Endothelial cell of umbilical vein (primary cell): ENCODE measurements at regions of chr11 and their contacts with region 1.

Region 1: GRCh38 chr11:94519478-94520084 is 7.3 kb downstream of the C11orf97 start:
- DNase-seq: peak; percentile 38
- H3K4me3 ChIP-seq: no peak overlapping the region
- H3K27ac ChIP-seq: no peak overlapping the region
- H3K4me1 ChIP-seq: no peaks in the 10 kb centered on the region
- H3K27me3 ChIP-seq: peaks cover 12 to 13% of the 10 kb centered on the region in 2 experiments
- CTCF ChIP-seq: peak; percentile 30 to 40
- POLR2A ChIP-seq: no peak

Region 2: GRCh38 chr11:94504689-94505293 is 14.8 kb before region 1 on chr11:
- CTCF ChIA-PET with region 1: interaction called, 15 read pairs
- POLR2A ChIA-PET with region 1: no interaction called
- dilution Hi-C with region 1: no loop called
- intact Hi-C with region 1: no loop called
- DNase-seq: peak; percentile 66
- H3K4me3 ChIP-seq: no peak overlapping the region
- H3K27ac ChIP-seq: no peak overlapping the region
- H3K4me1 ChIP-seq: no peaks in the 10 kb centered on the region
- H3K27me3 ChIP-seq: peaks cover 0 to 2% of the 10 kb centered on the region in 2 experiments
- CTCF ChIP-seq: peak; percentile 33 to 40
- POLR2A ChIP-seq: no peak

Region 3: GRCh38 chr11:94563176-94563847 is 43.7 kb after region 1 on chr11:
- CTCF ChIA-PET with region 1: interaction called, 8 read pairs
- POLR2A ChIA-PET with region 1: no interaction called
- dilution Hi-C with region 1: no loop called
- intact Hi-C with region 1: loop called (anchors 1 kb)
- DNase-seq: peak; percentile 61
- H3K4me3 ChIP-seq: no peak overlapping the region
- H3K27ac ChIP-seq: no peak overlapping the region
- H3K4me1 ChIP-seq: peaks cover 12% of the 10 kb centered on the region
- H3K27me3 ChIP-seq: no peaks in the 10 kb centered on the region
- CTCF ChIP-seq: no peak
- POLR2A ChIP-seq: no peak

Region 4: DNA sequence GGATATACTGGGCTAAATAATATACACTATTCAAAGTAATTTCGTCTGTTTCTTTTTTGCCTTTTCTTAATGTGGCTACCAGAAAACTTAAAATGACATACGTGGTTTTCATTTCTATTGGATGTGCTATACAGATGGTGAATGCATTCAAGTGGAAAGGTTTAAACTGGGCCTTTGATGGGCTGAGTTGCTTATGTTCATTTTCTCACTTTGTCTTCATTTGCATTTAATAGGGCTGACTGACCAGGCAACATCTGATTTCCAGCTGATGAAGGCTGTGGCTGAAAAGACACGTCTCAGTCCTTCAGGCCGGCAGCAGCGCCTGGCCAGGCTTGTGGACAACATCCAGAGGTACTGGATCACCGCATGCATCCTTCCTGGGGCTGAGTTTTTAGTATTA is 75.5 kb after region 1 on chr11:
- CTCF ChIA-PET with region 1: interaction called, 11 read pairs
- POLR2A ChIA-PET with region 1: no interaction called
- dilution Hi-C with region 1: no loop called
- intact Hi-C with region 1: no loop called
- DNase-seq: no peak
- H3K4me3 ChIP-seq: no peak overlapping the region
- H3K27ac ChIP-seq: no peak overlapping the region
- H3K4me1 ChIP-seq: no peaks in the 10 kb centered on the region
- H3K27me3 ChIP-seq: peaks cover 0 to 3% of the 10 kb centered on the region in 2 experiments
- CTCF ChIP-seq: no peak
- POLR2A ChIP-seq: no peak

Region 5: GRCh38 chr11:94602430-94603372 is 83.1 kb after region 1 on chr11:
- CTCF ChIA-PET with region 1: interaction called, 52 read pairs
- POLR2A ChIA-PET with region 1: no interaction called
- dilution Hi-C with region 1: no loop called
- intact Hi-C with region 1: loop called (anchors 1 kb)
- DNase-seq: peak; percentile 66
- H3K4me3 ChIP-seq: no peak overlapping the region
- H3K27ac ChIP-seq: no peak overlapping the region
- H3K4me1 ChIP-seq: no peaks in the 10 kb centered on the region
- H3K27me3 ChIP-seq: no peaks in the 10 kb centered on the region
- CTCF ChIP-seq: peak; percentile 31 to 40
- POLR2A ChIP-seq: no peak

Region 6: GRCh38 chr11:94747146-94748080 is 227.8 kb after region 1 on chr11:
- CTCF ChIA-PET with region 1: no interaction called
- POLR2A ChIA-PET with region 1: no interaction called
- dilution Hi-C with region 1: no loop called
- intact Hi-C with region 1: no loop called
- DNase-seq: no peak
- H3K4me3 ChIP-seq: no peak overlapping the region
- H3K27ac ChIP-seq: no peak overlapping the region
- H3K4me1 ChIP-seq: peaks cover 20% of the 10 kb centered on the region
- H3K27me3 ChIP-seq: no peaks in the 10 kb centered on the region
- CTCF ChIP-seq: no peak
- POLR2A ChIP-seq: no peak

Region 7: DNA sequence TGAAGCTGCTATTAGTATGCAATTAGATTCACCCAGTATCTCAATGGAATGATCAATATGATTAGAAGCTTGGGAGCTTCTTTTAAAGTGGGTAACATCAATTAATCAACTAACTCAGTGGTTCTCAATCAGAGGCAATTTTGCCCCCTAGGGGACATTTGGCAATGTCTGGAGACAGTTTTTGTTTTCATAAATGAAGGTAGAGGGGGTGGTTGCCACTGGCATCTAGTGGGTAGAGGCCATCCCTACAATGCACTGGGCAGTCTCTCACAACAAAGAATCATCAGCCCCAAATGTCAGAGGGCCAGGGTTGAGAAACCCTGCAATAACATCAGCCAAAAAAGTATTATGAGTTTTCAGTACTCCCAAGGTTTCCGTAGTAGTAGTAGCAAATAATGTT is 242.6 kb after region 1 on chr11:
- CTCF ChIA-PET with region 1: interaction called, 5 read pairs
- POLR2A ChIA-PET with region 1: no interaction called
- dilution Hi-C with region 1: no loop called
- intact Hi-C with region 1: loop called (anchors 2 kb)
- DNase-seq: peak; percentile 47
- H3K4me3 ChIP-seq: no peak overlapping the region
- H3K27ac ChIP-seq: no peak overlapping the region
- H3K4me1 ChIP-seq: peaks cover under 1% of the 10 kb centered on the region
- H3K27me3 ChIP-seq: no peaks in the 10 kb centered on the region
- CTCF ChIP-seq: peak; percentile 52 to 58
- POLR2A ChIP-seq: no peak

Region 8: GRCh38 chr11:96424693-96425092 is 1905.1 kb after region 1 on chr11:
- CTCF ChIA-PET with region 1: interaction called, 4 read pairs
- POLR2A ChIA-PET with region 1: no interaction called
- dilution Hi-C with region 1: no loop called
- intact Hi-C with region 1: loop called (anchors 5 kb)
- DNase-seq: peak; percentile 51
- H3K4me3 ChIP-seq: no peak overlapping the region
- H3K27ac ChIP-seq: no peak overlapping the region
- H3K4me1 ChIP-seq: peaks cover 2% of the 10 kb centered on the region
- H3K27me3 ChIP-seq: peaks cover 0 to 17% of the 10 kb centered on the region in 2 experiments
- CTCF ChIP-seq: no peak
- POLR2A ChIP-seq: no peak